Activated naive CD4-positive, alpha-beta T cell treated with anti-CD3 and anti-CD28 coated beads for 36 hours (primary cell): ENCODE measurements at regions of chr4 and their contacts with region 1.

Region 1: GRCh38 chr4:142549726-142550463 is 296.2 kb downstream of the INPP4B start:
- DNase-seq: no peak
- H3K4me3 Mint-ChIP-seq: no peak overlapping the region
- H3K27ac Mint-ChIP-seq: peak overlapping the region; percentile 60
- H3K4me1 Mint-ChIP-seq: peaks cover 71% of the 10 kb centered on the region
- H3K27me3 Mint-ChIP-seq: no peaks in the 10 kb centered on the region

Region 2: GRCh38 chr4:141117935-141118334 is 1432.0 kb before region 1 on chr4:
- CTCF ChIA-PET with region 1: no interaction called
- intact Hi-C with region 1: no loop called
- DNase-seq: no peak
- H3K4me3 Mint-ChIP-seq: no peak overlapping the region
- H3K27ac Mint-ChIP-seq: no peak overlapping the region
- H3K4me1 Mint-ChIP-seq: no peaks in the 10 kb centered on the region
- H3K27me3 Mint-ChIP-seq: peaks cover 18% of the 10 kb centered on the region

Region 3: GRCh38 chr4:141636082-141636770 is 913.7 kb before region 1 on chr4 and contains the start of gene IL15:
- CTCF ChIA-PET with region 1: no interaction called
- intact Hi-C with region 1: loop called (anchors 5 kb)
- DNase-seq: peak; percentile 86
- H3K4me3 Mint-ChIP-seq: peak within 1 kb of the TSS; percentile 89
- H3K27ac Mint-ChIP-seq: no peak within 1 kb of the TSS
- H3K4me1 Mint-ChIP-seq: peaks cover 10% of the 10 kb centered on the region
- H3K27me3 Mint-ChIP-seq: peaks cover 9% of the 10 kb centered on the region
- total RNA-seq, gene IL15: 0.19 to 0.52 TPM

Region 4: GRCh38 chr4:142379277-142380057 is 170.4 kb before region 1 on chr4:
- CTCF ChIA-PET with region 1: no interaction called
- intact Hi-C with region 1: loop called (anchors 1 kb)
- DNase-seq: no peak
- H3K4me3 Mint-ChIP-seq: no peak overlapping the region
- H3K27ac Mint-ChIP-seq: peak overlapping the region; percentile 75
- H3K4me1 Mint-ChIP-seq: peaks cover 72% of the 10 kb centered on the region
- H3K27me3 Mint-ChIP-seq: no peaks in the 10 kb centered on the region

Region 5: GRCh38 chr4:142500974-142501373 is 48.9 kb before region 1 on chr4:
- CTCF ChIA-PET with region 1: no interaction called
- intact Hi-C with region 1: no loop called
- DNase-seq: no peak
- H3K4me3 Mint-ChIP-seq: no peak overlapping the region
- H3K27ac Mint-ChIP-seq: no peak overlapping the region
- H3K4me1 Mint-ChIP-seq: peaks cover 9% of the 10 kb centered on the region
- H3K27me3 Mint-ChIP-seq: no peaks in the 10 kb centered on the region

Region 6: DNA sequence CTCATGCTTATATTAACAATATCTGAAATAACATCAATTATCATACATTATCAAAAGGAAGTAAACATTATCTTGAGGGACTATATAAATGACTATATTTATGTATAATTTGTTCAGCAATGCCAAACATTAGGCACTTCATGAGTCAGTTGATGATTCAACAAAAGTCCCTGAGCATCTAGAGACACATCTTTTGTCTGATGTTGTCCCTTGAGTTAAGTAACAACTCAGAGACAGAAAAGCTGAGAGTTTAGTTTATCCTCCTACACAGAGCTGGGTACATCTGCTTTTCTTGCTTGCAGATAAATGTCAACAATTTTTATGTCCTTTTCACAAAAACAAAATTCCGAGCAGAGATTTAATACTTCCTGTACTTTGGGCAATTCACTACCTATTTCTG is 14.9 kb before region 1 on chr4:
- CTCF ChIA-PET with region 1: interaction called, 4 read pairs
- intact Hi-C with region 1: loop called (anchors 1 kb)
- DNase-seq: no peak
- H3K4me3 Mint-ChIP-seq: no peak overlapping the region
- H3K27ac Mint-ChIP-seq: no peak overlapping the region
- H3K4me1 Mint-ChIP-seq: peaks cover 48% of the 10 kb centered on the region
- H3K27me3 Mint-ChIP-seq: no peaks in the 10 kb centered on the region

Region 7: GRCh38 chr4:142840516-142841123 is 290.7 kb after region 1 on chr4:
- CTCF ChIA-PET with region 1: no interaction called
- intact Hi-C with region 1: loop called (anchors 1 kb)
- DNase-seq: no peak
- H3K4me3 Mint-ChIP-seq: no peak overlapping the region
- H3K27ac Mint-ChIP-seq: no peak overlapping the region
- H3K4me1 Mint-ChIP-seq: peaks cover 31% of the 10 kb centered on the region
- H3K27me3 Mint-ChIP-seq: no peaks in the 10 kb centered on the region